Naive thymus-derived CD8-positive, alpha-beta T cell (primary cell): ENCODE measurements at regions of chr1 and their contacts with region 1.

Region 1: GRCh38 chr1:160607011-160607671 is 27.8 kb upstream of the CD84 start:
- DNase-seq: peak in 9 of 10 donors; percentile 51 to 85 (median 72)
- ATAC-seq: peak; percentile 97 to 99
- H3K4me3 Mint-ChIP-seq: peak overlapping the region in 6 of 10 donors; percentile 8 to 55 (median 44)
- H3K27ac Mint-ChIP-seq: peak overlapping the region; percentile 46 to 94 (median 79)
- H3K4me1 Mint-ChIP-seq: peaks cover 9 to 31% (median 26%) of the 10 kb centered on the region in 4 donors
- H3K27me3 Mint-ChIP-seq: no peaks in the 10 kb centered on the region

Region 2: DNA sequence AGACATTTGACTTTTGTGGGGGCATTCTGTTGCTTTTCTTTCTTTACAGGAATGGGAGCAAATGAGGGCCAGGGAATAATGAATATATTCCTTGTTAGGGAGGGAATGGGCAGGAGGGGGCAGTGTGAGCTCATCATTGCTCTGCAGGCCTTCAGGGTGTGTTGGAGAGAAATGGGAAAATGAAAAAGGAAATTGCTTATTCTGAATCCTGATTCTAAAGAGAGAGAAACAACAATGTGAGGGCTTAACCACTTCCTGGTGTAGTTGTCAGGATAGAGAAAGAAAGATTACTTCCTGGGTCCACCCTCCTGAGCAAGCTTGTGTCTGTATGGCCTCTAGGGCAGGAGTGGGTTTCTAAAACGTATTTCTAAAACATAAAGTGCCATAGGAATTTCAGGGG is 178.5 kb before region 1 on chr1:
- POLR2A ChIA-PET with region 1: interaction called, 11 read pairs
- DNase-seq: peak in 4 of 10 donors; percentile 12 to 52 (median 45)
- ATAC-seq: peak; percentile 63 to 72
- H3K4me3 Mint-ChIP-seq: peak overlapping the region in 9 of 10 donors; percentile 58 to 80 (median 74)
- H3K27ac Mint-ChIP-seq: peak overlapping the region; percentile 88 to 99 (median 94)
- H3K4me1 Mint-ChIP-seq: peaks cover 32 to 75% (median 61%) of the 10 kb centered on the region in 4 donors
- H3K27me3 Mint-ChIP-seq: no peaks in the 10 kb centered on the region

Region 3: GRCh38 chr1:160550572-160551034 is 56.5 kb before region 1 on chr1:
- POLR2A ChIA-PET with region 1: interaction called, 16 read pairs
- DNase-seq: peak in 8 of 10 donors; percentile 27 to 79 (median 45)
- ATAC-seq: peak; percentile 77 to 83
- H3K4me3 Mint-ChIP-seq: no peak overlapping the region
- H3K27ac Mint-ChIP-seq: peak overlapping the region in 8 of 10 donors; percentile 34 to 83 (median 70)
- H3K4me1 Mint-ChIP-seq: peaks cover 12 to 73% (median 25%) of the 10 kb centered on the region in 4 donors
- H3K27me3 Mint-ChIP-seq: no peaks in the 10 kb centered on the region

Region 4: GRCh38 chr1:160567858-160568682 is 39.1 kb before region 1 on chr1:
- POLR2A ChIA-PET with region 1: interaction called, 12 read pairs
- DNase-seq: peak; percentile 19 to 86 (median 66)
- ATAC-seq: peak; percentile 96 to 97
- H3K4me3 Mint-ChIP-seq: peak overlapping the region; percentile 49 to 85 (median 71)
- H3K27ac Mint-ChIP-seq: peak overlapping the region; percentile 84 to 100 (median 97)
- H3K4me1 Mint-ChIP-seq: peaks cover 53 to 95% (median 92%) of the 10 kb centered on the region in 4 donors
- H3K27me3 Mint-ChIP-seq: no peaks in the 10 kb centered on the region

Region 5: GRCh38 chr1:160584784-160585183 is 22.4 kb before region 1 on chr1:
- POLR2A ChIA-PET with region 1: no interaction called
- DNase-seq: no peak
- ATAC-seq: no peak
- H3K4me3 Mint-ChIP-seq: peak overlapping the region in 4 of 10 donors; percentile 18 to 53 (median 32)
- H3K27ac Mint-ChIP-seq: peak overlapping the region in 4 of 10 donors; percentile 66 to 97 (median 70)
- H3K4me1 Mint-ChIP-seq: peaks cover 17 to 55% (median 47%) of the 10 kb centered on the region in 4 donors
- H3K27me3 Mint-ChIP-seq: no peaks in the 10 kb centered on the region